ENCODE measurements at regions of chr5 and their contacts with region 1.

Region 1: DNA sequence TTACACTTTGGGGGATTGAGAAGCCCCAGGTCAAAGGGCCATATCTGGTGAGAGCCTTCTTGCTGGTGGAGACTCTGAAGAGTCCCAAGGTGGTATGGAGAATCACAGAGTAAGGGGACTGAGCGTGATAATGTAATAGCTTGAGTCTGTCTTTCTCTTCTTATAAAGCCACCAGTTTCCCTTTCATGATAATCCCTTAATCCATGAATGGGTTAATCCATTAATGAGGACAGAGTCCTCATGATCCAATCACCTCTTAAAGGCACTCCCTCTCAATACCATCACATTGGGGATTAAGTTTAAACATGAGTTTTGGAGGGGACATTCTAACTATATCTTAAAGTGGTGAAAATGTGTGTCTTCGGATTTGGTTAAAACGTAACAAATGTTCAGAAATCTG is 21.5 kb downstream of the WDR36 start:
- DNase-seq: no peak
- CTCF ChIP-seq: no peak

Region 2: DNA sequence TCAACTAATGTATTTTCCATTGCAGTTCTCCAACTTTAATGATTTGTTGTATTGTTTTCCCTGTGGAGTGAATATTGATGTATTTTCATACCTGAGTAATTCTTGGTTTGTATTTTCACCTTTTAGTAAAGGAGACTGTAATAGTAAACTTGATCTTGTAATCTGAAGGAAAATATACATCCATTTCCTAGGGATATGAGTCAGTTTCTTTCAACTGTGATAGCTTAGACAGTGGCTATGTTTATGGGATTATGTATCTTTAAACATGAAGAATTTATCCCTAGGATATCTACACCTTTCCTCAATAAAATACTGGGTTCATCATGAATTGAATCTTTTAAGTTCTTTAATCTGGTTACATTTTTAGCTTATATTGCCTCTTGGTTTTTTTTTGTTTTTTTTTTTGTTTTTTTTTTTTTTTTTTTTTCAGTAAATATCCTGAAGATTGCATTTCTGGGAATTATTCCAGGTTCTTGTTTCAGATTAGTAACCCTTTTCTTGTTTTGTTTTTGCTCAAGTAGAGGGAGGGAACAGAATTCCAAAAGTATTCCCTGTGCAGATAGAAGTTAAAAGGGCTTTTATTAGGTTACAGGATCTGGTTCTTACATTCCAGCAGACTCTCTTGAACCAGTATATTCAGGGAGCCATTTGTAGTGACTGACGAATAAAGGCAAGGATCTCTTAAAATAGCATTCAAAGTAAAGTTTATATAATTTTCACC is 14.5 kb before region 1 on chr5:
- CTCF ChIA-PET with region 1: interaction called, 10 read pairs
- POLR2A ChIA-PET with region 1: no interaction called
- DNase-seq: no peak
- CTCF ChIP-seq: no peak

Region 3: DNA sequence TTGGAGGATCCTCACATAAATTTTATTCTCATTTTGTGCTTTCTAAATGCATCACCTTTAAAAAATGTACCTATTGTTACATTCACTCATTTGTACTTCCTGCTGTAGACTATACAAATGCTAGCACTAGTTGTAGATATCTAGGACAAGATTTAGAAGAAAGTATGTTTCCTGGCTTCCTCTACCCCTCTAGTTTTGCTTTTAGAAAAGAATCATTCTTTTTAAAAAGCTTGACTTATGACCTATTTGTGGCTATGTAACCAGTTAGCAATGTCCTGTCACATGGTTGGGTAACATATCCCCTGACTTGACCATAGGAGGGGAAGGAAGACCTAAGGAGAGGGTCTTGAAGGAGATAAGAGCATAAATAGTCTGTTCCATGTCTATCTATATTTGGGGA is 123.8 kb after region 1 on chr5:
- CTCF ChIA-PET with region 1: no interaction called
- POLR2A ChIA-PET with region 1: no interaction called
- DNase-seq: no peak
- CTCF ChIP-seq: no peak

Measured in GM10248 (cell line).